H1 (cell line): ENCODE measurements at regions of chr14 and their contacts with region 1.

Region 1: DNA sequence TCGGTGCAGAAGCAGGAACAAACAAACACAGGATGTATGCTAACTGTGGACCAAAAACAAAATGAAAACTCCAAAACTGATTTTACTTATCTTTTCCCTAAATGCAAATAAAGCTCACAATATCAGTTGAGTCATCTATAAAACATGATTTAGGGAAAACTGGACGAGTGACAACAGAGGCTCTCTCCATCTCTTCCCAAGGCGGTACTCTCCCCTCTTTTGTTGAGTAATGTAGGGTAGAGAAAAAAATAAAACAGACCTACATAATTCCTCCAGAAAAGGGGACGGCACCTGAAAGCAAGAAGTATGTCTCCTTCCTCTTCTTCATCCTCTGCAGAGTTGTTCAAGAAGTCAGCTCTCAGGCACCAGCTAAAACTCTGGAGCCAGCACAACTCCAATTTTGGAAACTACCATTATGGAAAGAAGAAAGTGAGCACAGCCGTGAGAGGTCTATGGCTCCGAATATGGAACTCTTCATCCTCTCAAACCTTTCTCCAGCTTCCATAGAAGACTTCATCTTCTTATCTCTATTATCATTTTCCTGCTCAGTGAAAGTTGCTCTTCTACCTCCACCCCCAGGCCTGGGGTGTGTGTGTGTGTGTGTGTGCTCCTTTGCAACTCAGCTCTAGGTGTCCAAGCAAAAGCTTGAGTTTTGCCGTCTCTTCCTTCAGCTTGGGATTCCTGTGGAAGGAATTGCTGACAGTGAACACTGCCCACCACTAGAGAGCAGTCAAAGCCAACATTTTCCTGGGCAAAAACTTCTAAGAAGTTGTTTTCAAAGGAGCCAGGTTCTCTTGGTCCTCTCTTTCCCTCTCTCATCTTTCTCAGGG is 155.4 kb downstream of the DIO2 start:
- DNase-seq: peak; percentile 34 to 58
- H3K4me3 ChIP-seq: no peak overlapping the region
- H3K27ac ChIP-seq: no peak overlapping the region
- H3K4me1 ChIP-seq: no peaks in the 10 kb centered on the region
- H3K27me3 ChIP-seq: no peaks in the 10 kb centered on the region
- CTCF ChIP-seq: peak; percentile 15 to 89 (median 87)
- EP300 ChIP-seq: no peak
- POLR2A ChIP-seq: no peak
- RAD21 ChIP-seq: peak; percentile 94 to 95

Region 2: GRCh38 chr14:80037349-80037748 is 18.5 kb before region 1 on chr14:
- CTCF ChIA-PET with region 1: no interaction called
- POLR2A ChIA-PET with region 1: no interaction called
- DNase-seq: no peak
- H3K4me3 ChIP-seq: no peak overlapping the region
- H3K27ac ChIP-seq: no peak overlapping the region
- H3K4me1 ChIP-seq: no peaks in the 10 kb centered on the region
- H3K27me3 ChIP-seq: no peaks in the 10 kb centered on the region
- CTCF ChIP-seq: no peak
- EP300 ChIP-seq: no peak
- POLR2A ChIP-seq: no peak
- RAD21 ChIP-seq: 0 out of 4 replicates have a peak, but pooled peaks of 1 of the 2 experiments have one; percentile 9

Region 3: GRCh38 chr14:80186301-80186810 is 130.5 kb after region 1 on chr14:
- CTCF ChIA-PET with region 1: no interaction called
- POLR2A ChIA-PET with region 1: no interaction called
- DNase-seq: no peak
- H3K4me3 ChIP-seq: no peak overlapping the region
- H3K27ac ChIP-seq: no peak overlapping the region
- H3K4me1 ChIP-seq: no peaks in the 10 kb centered on the region
- H3K27me3 ChIP-seq: no peaks in the 10 kb centered on the region
- CTCF ChIP-seq: no peak
- EP300 ChIP-seq: no peak
- POLR2A ChIP-seq: no peak
- RAD21 ChIP-seq: no peak

Region 4: DNA sequence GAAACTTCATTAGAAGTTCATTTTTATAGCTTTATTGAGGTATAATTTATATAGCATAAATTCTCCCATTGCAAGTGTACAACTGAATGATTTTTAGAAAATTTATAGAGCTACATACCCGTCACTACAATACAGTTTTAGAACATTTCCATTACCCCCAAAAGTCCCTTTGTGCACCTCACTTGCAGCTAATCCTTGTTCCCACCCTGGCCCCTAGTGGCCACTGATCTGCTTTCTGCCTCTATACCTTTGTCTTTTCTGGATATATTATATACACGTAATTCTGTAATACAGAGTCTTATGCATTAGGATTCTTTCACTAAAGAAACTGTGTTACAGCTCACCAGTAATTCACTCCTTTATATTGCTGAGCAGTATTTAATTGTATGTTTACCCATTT is 300.5 kb after region 1 on chr14:
- CTCF ChIA-PET with region 1: interaction called, 16 read pairs
- POLR2A ChIA-PET with region 1: no interaction called
- DNase-seq: no peak
- H3K4me3 ChIP-seq: no peak overlapping the region
- H3K27ac ChIP-seq: no peak overlapping the region
- H3K4me1 ChIP-seq: no peaks in the 10 kb centered on the region
- H3K27me3 ChIP-seq: peaks cover 0 to 1% (median 0%) of the 10 kb centered on the region in 4 experiments; a peak in 1 of 7 replicates
- CTCF ChIP-seq: peak; percentile 45 to 61 (median 49)
- EP300 ChIP-seq: no peak
- POLR2A ChIP-seq: no peak
- RAD21 ChIP-seq: peak; percentile 67 to 71

Region 5: DNA sequence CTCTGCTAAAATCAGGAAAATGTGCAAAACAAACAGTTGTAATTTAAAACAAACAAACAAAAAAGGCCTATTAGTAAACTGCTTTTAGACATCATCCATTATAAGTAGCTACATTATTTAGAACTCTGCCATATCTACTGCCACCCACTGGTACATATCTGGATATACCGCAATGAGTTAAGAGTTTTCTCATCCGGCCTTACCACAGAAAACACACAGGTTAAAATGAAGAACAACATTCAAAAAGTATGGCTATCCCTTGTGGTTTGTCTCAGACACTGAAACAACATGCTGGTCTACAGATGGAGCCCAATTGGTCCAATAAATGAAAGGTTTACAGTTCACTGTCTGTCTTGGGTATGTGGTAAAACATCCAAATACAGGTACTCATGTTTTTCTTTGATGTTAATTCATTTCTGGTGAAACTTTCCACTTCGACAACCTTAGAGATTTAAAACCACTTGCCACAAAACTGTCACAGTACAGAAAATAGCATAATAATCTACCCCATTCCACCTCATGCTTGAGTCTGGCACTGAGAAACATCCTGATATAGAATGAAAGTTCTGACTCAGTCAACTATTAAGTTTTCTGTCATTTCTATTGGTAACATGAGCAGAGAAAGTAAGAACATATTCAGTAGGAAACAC is 531.3 kb after region 1 on chr14:
- CTCF ChIA-PET with region 1: interaction called, 14 read pairs
- POLR2A ChIA-PET with region 1: no interaction called
- DNase-seq: no peak
- H3K4me3 ChIP-seq: no peak overlapping the region
- H3K27ac ChIP-seq: no peak overlapping the region
- H3K4me1 ChIP-seq: no peaks in the 10 kb centered on the region; a peak in 1 of 7 replicates
- H3K27me3 ChIP-seq: no peaks in the 10 kb centered on the region
- CTCF ChIP-seq: peak in 2 of 3 experiments; percentile 17 to 51; a peak in 2 of 4 replicates
- EP300 ChIP-seq: no peak
- POLR2A ChIP-seq: no peak
- RAD21 ChIP-seq: peak; percentile 47 to 48